ENCODE measurements at regions of chr6 and their contacts with region 1.

Region 1: GRCh38 chr6:135145063-135145800 is 35.9 kb upstream of the MYB start:
- DNase-seq: no peak
- H3K4me3 Mint-ChIP-seq: no peak overlapping the region
- H3K27ac Mint-ChIP-seq: peak overlapping the region; percentile 76
- H3K4me1 Mint-ChIP-seq: peaks cover 51% of the 10 kb centered on the region
- H3K27me3 Mint-ChIP-seq: no peaks in the 10 kb centered on the region

Region 2: DNA sequence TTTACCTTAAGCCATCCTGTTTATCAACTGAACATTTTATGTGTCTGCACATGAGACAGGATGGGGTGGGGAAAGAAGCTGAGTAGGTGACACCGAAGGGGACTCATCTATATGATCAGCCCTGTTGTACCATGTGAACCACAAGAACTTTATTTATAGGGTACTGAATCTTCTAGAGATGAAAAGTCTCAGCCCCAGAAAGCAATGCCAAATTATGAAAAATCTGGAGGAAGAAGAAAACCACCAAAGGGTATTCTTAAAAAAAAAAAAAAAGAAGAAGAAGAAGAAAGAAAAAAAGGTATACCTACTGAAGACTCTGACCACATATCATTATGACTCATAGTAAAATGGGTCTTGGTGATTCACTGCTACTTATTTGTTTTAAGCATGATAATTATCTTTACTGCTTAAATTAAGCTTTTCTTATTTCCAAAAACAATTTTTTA is 50.8 kb before region 1 on chr6:
- CTCF ChIA-PET with region 1: interaction called, 3 read pairs
- intact Hi-C with region 1: loop called (anchors 1 kb)
- DNase-seq: peak; percentile 59
- H3K4me3 Mint-ChIP-seq: no peak overlapping the region
- H3K27ac Mint-ChIP-seq: peak overlapping the region; percentile 71
- H3K4me1 Mint-ChIP-seq: peaks cover 56% of the 10 kb centered on the region
- H3K27me3 Mint-ChIP-seq: no peaks in the 10 kb centered on the region

Region 3: GRCh38 chr6:135170849-135171248 is 25.6 kb after region 1 on chr6:
- CTCF ChIA-PET with region 1: interaction called, 4 read pairs
- intact Hi-C with region 1: loop called (anchors 1 kb)
- DNase-seq: peak; percentile 65
- H3K4me3 Mint-ChIP-seq: no peak overlapping the region
- H3K27ac Mint-ChIP-seq: peak overlapping the region; percentile 88
- H3K4me1 Mint-ChIP-seq: peaks cover 17% of the 10 kb centered on the region
- H3K27me3 Mint-ChIP-seq: no peaks in the 10 kb centered on the region

Region 4: GRCh38 chr6:135195522-135195921 is 50.3 kb after region 1 on chr6:
- CTCF ChIA-PET with region 1: interaction called, 4 read pairs
- intact Hi-C with region 1: loop called (anchors 1 kb)
- DNase-seq: no peak
- H3K4me3 Mint-ChIP-seq: no peak overlapping the region
- H3K27ac Mint-ChIP-seq: no peak overlapping the region
- H3K4me1 Mint-ChIP-seq: peaks cover 19% of the 10 kb centered on the region
- H3K27me3 Mint-ChIP-seq: no peaks in the 10 kb centered on the region

Measured in activated naive CD4-positive, alpha-beta T cell treated with anti-CD3 and anti-CD28 coated beads for 36 hours (primary cell).